ENCODE measurements at regions of chr22 and their contacts with region 1.

Region 1: GRCh38 chr22:30485362-30485988 is 13.7 kb upstream of the SEC14L3 start:
- DNase-seq: peak; percentile 5
- ATAC-seq: peak; percentile 100
- H3K4me3 ChIP-seq: no peak overlapping the region
- H3K27ac ChIP-seq: no peak overlapping the region
- H3K4me1 ChIP-seq: no peaks in the 10 kb centered on the region; the same call in 1 of the 2 replicates
- H3K27me3 ChIP-seq: no peaks in the 10 kb centered on the region; a peak in 2 of 4 replicates
- CTCF ChIP-seq: peak; percentile 90 to 93 (median 92)
- EP300 ChIP-seq: no peak
- POLR2A ChIP-seq: no peak
- RAD21 ChIP-seq: peak; percentile 85

Region 2: GRCh38 chr22:30116362-30117117 is 368.9 kb before region 1 on chr22:
- CTCF ChIA-PET with region 1: no interaction called
- POLR2A ChIA-PET with region 1: no interaction called
- RAD21 ChIA-PET with region 1: no interaction called
- SMC1A ChIA-PET with region 1: no interaction called
- in situ Hi-C with region 1: no loop called
- intact Hi-C with region 1: loop called (anchors 5 kb)
- DNase-seq: no peak
- ATAC-seq: no peak
- H3K4me3 ChIP-seq: no peak overlapping the region
- H3K27ac ChIP-seq: no peak overlapping the region
- H3K4me1 ChIP-seq: no peaks in the 10 kb centered on the region
- H3K27me3 ChIP-seq: no peaks in the 10 kb centered on the region
- CTCF ChIP-seq: no peak
- EP300 ChIP-seq: no peak
- POLR2A ChIP-seq: no peak
- RAD21 ChIP-seq: no peak

Region 3: GRCh38 chr22:30386960-30387827 is 98.3 kb before region 1 on chr22 and contains the start of gene RNF215:
- CTCF ChIA-PET with region 1: interaction called, 53 read pairs
- POLR2A ChIA-PET with region 1: interaction called, 3 read pairs
- RAD21 ChIA-PET with region 1: interaction called, 7 read pairs
- SMC1A ChIA-PET with region 1: interaction called, 27 read pairs
- in situ Hi-C with region 1: loop called (anchors 5 kb)
- intact Hi-C with region 1: loop called (anchors 1 kb)
- DNase-seq: no peak
- ATAC-seq: peak; percentile 88
- H3K4me3 ChIP-seq: peak within 1 kb of the TSS; percentile 77; the same call in 1 of the 2 replicates
- H3K27ac ChIP-seq: no peak within 1 kb of the TSS; the same call in 1 of the 2 replicates
- H3K4me1 ChIP-seq: peaks cover 15% of the 10 kb centered on the region
- H3K27me3 ChIP-seq: no peaks in the 10 kb centered on the region
- CTCF ChIP-seq: peak; percentile 76 to 86 (median 83)
- EP300 ChIP-seq: no peak
- POLR2A ChIP-seq: no peak; the same call in 1 of the 2 replicates
- RAD21 ChIP-seq: peak; percentile 85
- polyA plus RNA-seq, gene RNF215: 0.31 TPM in 1 of 2 experiments, not detected in the other

Region 4: GRCh38 chr22:30402028-30402765 is 83.3 kb before region 1 on chr22:
- CTCF ChIA-PET with region 1: no interaction called
- POLR2A ChIA-PET with region 1: no interaction called
- RAD21 ChIA-PET with region 1: no interaction called
- SMC1A ChIA-PET with region 1: no interaction called
- in situ Hi-C with region 1: no loop called
- intact Hi-C with region 1: no loop called
- DNase-seq: no peak
- ATAC-seq: no peak
- H3K4me3 ChIP-seq: no peak overlapping the region
- H3K27ac ChIP-seq: no peak overlapping the region
- H3K4me1 ChIP-seq: 0 out of 2 replicates have a peak, but pooled peaks cover 5% of the 10 kb centered on the region
- H3K27me3 ChIP-seq: peaks cover 4 to 7% of the 10 kb centered on the region in 2 experiments
- CTCF ChIP-seq: no peak
- EP300 ChIP-seq: no peak
- POLR2A ChIP-seq: no peak
- RAD21 ChIP-seq: no peak

Region 5: GRCh38 chr22:30444632-30445437 is 40.6 kb before region 1 on chr22:
- CTCF ChIA-PET with region 1: interaction called, 24 read pairs
- POLR2A ChIA-PET with region 1: no interaction called
- RAD21 ChIA-PET with region 1: interaction called, 16 read pairs
- SMC1A ChIA-PET with region 1: interaction called, 5 read pairs
- in situ Hi-C with region 1: no loop called
- intact Hi-C with region 1: loop called (anchors 1 kb)
- DNase-seq: no peak
- ATAC-seq: peak; percentile 78
- H3K4me3 ChIP-seq: no peak overlapping the region
- H3K27ac ChIP-seq: no peak overlapping the region
- H3K4me1 ChIP-seq: peaks cover 11% of the 10 kb centered on the region
- H3K27me3 ChIP-seq: no peaks in the 10 kb centered on the region
- CTCF ChIP-seq: peak; percentile 74 to 81 (median 78)
- EP300 ChIP-seq: no peak
- POLR2A ChIP-seq: peak; percentile 60
- RAD21 ChIP-seq: peak; percentile 80

Region 6: DNA sequence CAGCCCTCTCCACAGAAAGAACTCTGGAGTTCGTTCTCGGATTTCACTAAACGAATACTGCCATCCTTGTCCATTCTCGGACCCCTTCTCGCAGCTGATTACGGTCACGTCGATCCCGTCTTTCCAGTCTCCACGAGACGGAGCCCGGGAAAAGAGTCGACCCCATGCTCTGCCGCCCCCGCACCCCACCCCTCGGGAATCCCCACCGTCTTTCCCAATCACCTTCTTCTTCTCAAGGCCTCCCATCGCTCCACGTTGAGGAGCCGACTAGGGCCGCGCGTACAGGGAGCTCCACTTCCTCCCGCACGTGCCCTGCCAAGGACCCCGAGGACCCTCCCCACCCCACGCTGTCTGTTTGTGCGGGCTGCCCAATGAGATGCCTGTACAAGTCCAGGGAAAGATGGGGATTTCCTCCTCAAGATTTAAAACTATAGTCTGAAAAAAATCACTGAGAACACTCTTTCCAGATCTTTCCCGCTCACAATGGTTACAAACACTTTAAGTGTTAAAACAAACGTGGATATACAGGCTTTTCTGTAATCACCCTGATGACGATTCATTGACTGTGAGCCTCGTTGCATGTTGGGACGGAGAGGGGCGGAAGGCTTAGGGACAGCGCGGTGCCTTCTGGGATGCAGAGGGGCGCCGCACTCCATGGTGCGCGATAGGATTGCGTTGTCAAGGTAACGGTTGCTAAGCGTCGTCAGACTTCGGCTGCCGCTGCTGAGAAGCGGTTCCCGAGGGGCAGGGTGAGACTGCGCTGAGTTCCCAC is 106.3 kb after region 1 on chr22 and contains the start of gene PES1:
- CTCF ChIA-PET with region 1: no interaction called
- POLR2A ChIA-PET with region 1: no interaction called
- RAD21 ChIA-PET with region 1: no interaction called
- SMC1A ChIA-PET with region 1: no interaction called
- in situ Hi-C with region 1: no loop called
- intact Hi-C with region 1: no loop called
- DNase-seq: peak; percentile 97
- ATAC-seq: peak; percentile 100
- H3K4me3 ChIP-seq: peak within 1 kb of the TSS; percentile 97
- H3K27ac ChIP-seq: peak within 1 kb of the TSS; percentile 91
- H3K4me1 ChIP-seq: no peaks in the 10 kb centered on the region
- H3K27me3 ChIP-seq: no peaks in the 10 kb centered on the region
- CTCF ChIP-seq: no peak
- EP300 ChIP-seq: peak in 1 of 2 experiments; percentile 38; a peak in 1 of 4 replicates
- POLR2A ChIP-seq: peak; percentile 83
- RAD21 ChIP-seq: no peak
- polyA plus RNA-seq, gene PES1: 6.9 to 7.8 TPM

Measured in GM12878 (cell line).